ENCODE measurements at regions of chr12 and their contacts with region 1.

Region 1: DNA sequence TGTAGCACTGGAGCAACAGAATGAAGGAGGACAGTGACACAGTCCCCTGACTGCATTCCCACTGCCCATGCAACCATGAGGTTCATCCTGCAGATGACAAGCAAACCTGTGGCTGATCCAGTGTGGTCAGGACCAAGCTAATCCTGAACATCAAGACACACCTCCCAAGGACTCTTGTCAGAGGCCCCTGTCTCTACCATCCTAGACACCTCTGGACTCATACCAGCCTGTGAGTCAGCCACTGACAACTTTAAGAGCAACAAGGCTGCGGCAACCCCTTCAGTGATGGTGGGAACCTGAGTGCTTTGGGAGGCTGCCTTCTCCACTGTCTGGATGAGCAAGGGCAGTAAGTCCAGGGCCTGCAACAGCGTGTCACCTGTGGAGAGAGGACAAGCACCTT is 24.6 kb downstream of the GCN1 start:
- DNase-seq: no peak
- ATAC-seq: peak; percentile 12; the same call in 1 of the 2 replicates
- H3K4me3 ChIP-seq: no peak overlapping the region
- H3K27ac ChIP-seq: no peak overlapping the region
- H3K4me1 ChIP-seq: no peaks in the 10 kb centered on the region
- H3K27me3 ChIP-seq: no peaks in the 10 kb centered on the region
- CTCF ChIP-seq: no peak
- POLR2A ChIP-seq: no peak
- RAD21 ChIP-seq: no peak

Region 2: GRCh38 chr12:120139958-120140357 is 30.0 kb before region 1 on chr12:
- CTCF ChIA-PET with region 1: no interaction called
- POLR2A ChIA-PET with region 1: no interaction called
- RAD21 ChIA-PET with region 1: no interaction called
- intact Hi-C with region 1: loop called (anchors 5 kb)
- DNase-seq: no peak
- ATAC-seq: no peak
- H3K4me3 ChIP-seq: no peak overlapping the region
- H3K27ac ChIP-seq: no peak overlapping the region
- H3K4me1 ChIP-seq: no peaks in the 10 kb centered on the region
- H3K27me3 ChIP-seq: no peaks in the 10 kb centered on the region
- CTCF ChIP-seq: no peak
- POLR2A ChIP-seq: no peak
- RAD21 ChIP-seq: no peak

Region 3: GRCh38 chr12:120610560-120610959 is 440.6 kb after region 1 on chr12:
- CTCF ChIA-PET with region 1: no interaction called
- POLR2A ChIA-PET with region 1: no interaction called
- RAD21 ChIA-PET with region 1: no interaction called
- intact Hi-C with region 1: no loop called
- DNase-seq: no peak
- ATAC-seq: no peak
- H3K4me3 ChIP-seq: no peak overlapping the region
- H3K27ac ChIP-seq: no peak overlapping the region
- H3K4me1 ChIP-seq: no peaks in the 10 kb centered on the region
- H3K27me3 ChIP-seq: no peaks in the 10 kb centered on the region
- CTCF ChIP-seq: no peak
- POLR2A ChIP-seq: no peak
- RAD21 ChIP-seq: no peak

Region 4: GRCh38 chr12:120698665-120699064 is 528.7 kb after region 1 on chr12:
- CTCF ChIA-PET with region 1: no interaction called
- POLR2A ChIA-PET with region 1: no interaction called
- RAD21 ChIA-PET with region 1: no interaction called
- intact Hi-C with region 1: no loop called
- DNase-seq: no peak
- ATAC-seq: no peak
- H3K4me3 ChIP-seq: no peak overlapping the region
- H3K27ac ChIP-seq: no peak overlapping the region
- H3K4me1 ChIP-seq: no peaks in the 10 kb centered on the region
- H3K27me3 ChIP-seq: no peaks in the 10 kb centered on the region
- CTCF ChIP-seq: no peak
- POLR2A ChIP-seq: no peak
- RAD21 ChIP-seq: no peak